Right cardiac atrium (tissue), 5 donors: ENCODE measurements at regions of chr21 and their contacts with region 1.

Region 1: GRCh38 chr21:32257962-32258785 is 20.7 kb downstream of the MIS18A start:
- DNase-seq: peak; percentile 63 to 83 (median 70)
- ATAC-seq: peak; percentile 81
- H3K4me3 ChIP-seq: no peak overlapping the region
- H3K27ac ChIP-seq: no peak overlapping the region
- H3K4me1 ChIP-seq: peaks cover 2% of the 10 kb centered on the region
- H3K27me3 ChIP-seq: no peaks in the 10 kb centered on the region

Region 2: GRCh38 chr21:31781737-31782136 is 476.4 kb before region 1 on chr21:
- intact Hi-C with region 1: loop called in 3 of 4 experiments (anchors 5 kb)
- DNase-seq: peak; percentile 42 to 62 (median 59)
- ATAC-seq: peak; percentile 56 to 77
- H3K4me3 ChIP-seq: no peak overlapping the region
- H3K27ac ChIP-seq: no peak overlapping the region
- H3K4me1 ChIP-seq: peaks cover 2% of the 10 kb centered on the region
- H3K27me3 ChIP-seq: no peaks in the 10 kb centered on the region

Region 3: GRCh38 chr21:31866077-31866511 is 392.1 kb before region 1 on chr21:
- intact Hi-C with region 1: loop called (anchors 1 to 5 kb)
- DNase-seq: peak; percentile 88 to 95 (median 94)
- ATAC-seq: peak; percentile 93
- H3K4me3 ChIP-seq: no peak overlapping the region
- H3K27ac ChIP-seq: no peak overlapping the region
- H3K4me1 ChIP-seq: peaks cover 2% of the 10 kb centered on the region
- H3K27me3 ChIP-seq: no peaks in the 10 kb centered on the region

Region 4: DNA sequence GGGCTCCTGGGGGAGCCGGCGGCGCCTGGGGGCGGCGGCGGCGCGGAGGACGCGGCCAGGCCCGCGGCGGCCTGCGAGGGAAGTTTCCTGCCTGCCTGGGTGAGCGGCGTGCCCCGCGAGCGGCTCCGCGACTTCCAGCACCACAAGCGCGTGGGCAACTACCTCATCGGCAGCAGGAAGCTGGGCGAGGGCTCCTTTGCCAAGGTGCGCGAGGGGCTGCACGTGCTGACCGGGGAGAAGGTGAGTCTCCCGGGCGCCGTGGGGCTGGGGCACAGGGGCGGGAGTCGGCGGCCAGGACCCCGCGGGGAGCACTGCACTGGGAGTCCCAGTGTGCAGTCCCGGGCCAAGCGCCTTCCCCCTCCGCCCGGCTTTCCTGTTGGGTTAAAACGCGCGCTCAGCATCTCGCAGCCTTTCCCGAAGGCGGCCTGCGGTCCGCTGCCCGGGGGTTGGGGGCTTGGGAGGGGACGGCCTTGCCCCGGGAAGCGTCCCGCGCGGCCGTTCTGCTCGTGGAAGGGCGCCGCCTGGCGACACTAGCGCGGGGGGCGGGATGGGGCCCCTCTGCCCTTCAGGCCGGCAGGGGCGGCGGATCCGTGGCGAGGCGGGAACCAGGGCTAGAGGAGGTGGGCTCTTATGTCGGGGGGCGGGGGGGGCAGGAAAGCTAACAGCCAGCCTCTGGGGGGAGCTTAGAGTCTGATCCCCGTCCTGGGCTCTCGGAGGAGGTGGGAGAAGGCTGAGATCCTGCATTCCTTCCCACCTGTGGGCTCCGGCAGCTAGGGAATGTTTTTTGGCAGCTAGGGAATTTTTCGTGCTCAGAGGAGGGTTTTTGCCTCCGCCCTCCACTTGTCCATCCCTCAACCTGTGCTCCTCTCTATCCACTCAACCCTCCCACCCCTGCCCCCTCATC is 384.2 kb before region 1 on chr21:
- intact Hi-C with region 1: loop called in 2 of 4 experiments (anchors 5 kb)
- DNase-seq: peak; percentile 47 to 82 (median 82)
- ATAC-seq: peak; percentile 64 to 66
- H3K4me3 ChIP-seq: peak overlapping the region; percentile 89
- H3K27ac ChIP-seq: no peak overlapping the region
- H3K4me1 ChIP-seq: no peaks in the 10 kb centered on the region
- H3K27me3 ChIP-seq: no peaks in the 10 kb centered on the region

Region 5: GRCh38 chr21:32096411-32096810 is 161.8 kb before region 1 on chr21:
- intact Hi-C with region 1: loop called in 1 of 4 experiments (anchors 5 kb)
- DNase-seq: peak in 2 of 3 donors; percentile 51 to 72
- ATAC-seq: peak; percentile 33 to 52
- H3K4me3 ChIP-seq: no peak overlapping the region
- H3K27ac ChIP-seq: no peak overlapping the region
- H3K4me1 ChIP-seq: peaks cover 7% of the 10 kb centered on the region
- H3K27me3 ChIP-seq: no peaks in the 10 kb centered on the region

Region 6: GRCh38 chr21:32207406-32207716 is 50.8 kb before region 1 on chr21:
- intact Hi-C with region 1: no loop called
- DNase-seq: no peak
- ATAC-seq: no peak
- H3K4me3 ChIP-seq: no peak overlapping the region
- H3K27ac ChIP-seq: no peak overlapping the region
- H3K4me1 ChIP-seq: no peaks in the 10 kb centered on the region
- H3K27me3 ChIP-seq: no peaks in the 10 kb centered on the region